ENCODE measurements at regions of chr1 and their contacts with region 1.

Region 1: DNA sequence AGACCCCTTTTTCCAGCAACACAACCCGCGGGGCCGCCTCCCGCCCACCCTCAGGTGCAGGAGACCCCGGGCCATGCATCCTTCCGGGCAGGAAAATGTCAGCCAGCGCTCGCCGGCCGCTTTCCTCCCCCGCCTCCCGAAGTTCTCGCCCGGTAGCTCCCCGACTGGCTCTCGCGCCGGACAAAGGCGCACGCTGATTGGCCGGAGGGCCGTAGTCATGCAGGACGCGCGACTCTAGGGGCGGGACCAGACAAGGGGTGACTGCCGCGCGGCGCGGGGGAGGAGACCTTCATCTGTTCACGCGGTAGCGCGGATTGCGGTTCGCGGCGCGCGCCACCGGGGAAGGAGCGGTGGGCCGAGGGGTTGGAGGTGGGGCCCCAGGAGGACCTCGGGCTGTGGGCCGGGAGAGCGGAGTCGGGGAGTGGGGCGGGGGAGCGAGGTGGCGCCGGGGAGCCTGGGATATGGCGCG is at the start of gene FLVCR1:
- DNase-seq: peak; percentile 99
- H3K4me3 Mint-ChIP-seq: no peak within 1 kb of the TSS
- H3K27ac Mint-ChIP-seq: peak within 1 kb of the TSS; percentile 97
- H3K4me1 Mint-ChIP-seq: peaks cover 19% of the 10 kb centered on the region
- H3K27me3 Mint-ChIP-seq: no peaks in the 10 kb centered on the region
- total RNA-seq, gene FLVCR1: 17.9 and 21.8 TPM in 2 replicates

Region 2: GRCh38 chr1:212791676-212792395 is 66.2 kb before region 1 on chr1 and contains the starts of genes NSL1 and TATDN3:
- intact Hi-C with region 1: loop called (anchors 1 kb)
- DNase-seq: peak; percentile 99
- H3K4me3 Mint-ChIP-seq: peak within 1 kb of the TSS; percentile 93
- H3K27ac Mint-ChIP-seq: peak within 1 kb of the TSS; percentile 96
- H3K4me1 Mint-ChIP-seq: peaks cover 26% of the 10 kb centered on the region
- H3K27me3 Mint-ChIP-seq: no peaks in the 10 kb centered on the region
- total RNA-seq, gene NSL1: 37.3 and 40.0 TPM in 2 replicates
- total RNA-seq, gene TATDN3: 15.1 and 16.2 TPM in 2 replicates

Region 3: DNA sequence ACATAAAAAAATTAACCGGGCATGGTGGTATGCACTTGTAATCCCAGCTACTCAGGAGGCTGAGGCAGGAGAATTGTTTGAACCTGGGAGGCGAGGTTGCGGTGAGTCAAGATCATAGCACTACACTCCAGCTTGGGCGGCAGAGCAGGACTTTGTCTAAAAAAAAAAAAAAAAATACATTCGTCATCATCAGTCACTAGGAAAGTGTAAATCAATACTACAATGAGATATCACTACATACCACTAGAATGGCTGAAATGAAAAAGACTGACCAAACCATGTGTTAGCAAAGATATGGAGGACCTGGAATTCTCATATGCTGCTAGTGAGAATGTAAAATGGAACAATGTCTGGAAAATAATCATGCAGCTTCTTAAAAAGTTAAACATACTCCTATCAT is 19.9 kb before region 1 on chr1:
- intact Hi-C with region 1: no loop called
- DNase-seq: no peak
- H3K4me3 Mint-ChIP-seq: no peak overlapping the region
- H3K27ac Mint-ChIP-seq: no peak overlapping the region
- H3K4me1 Mint-ChIP-seq: no peaks in the 10 kb centered on the region
- H3K27me3 Mint-ChIP-seq: no peaks in the 10 kb centered on the region

Region 4: DNA sequence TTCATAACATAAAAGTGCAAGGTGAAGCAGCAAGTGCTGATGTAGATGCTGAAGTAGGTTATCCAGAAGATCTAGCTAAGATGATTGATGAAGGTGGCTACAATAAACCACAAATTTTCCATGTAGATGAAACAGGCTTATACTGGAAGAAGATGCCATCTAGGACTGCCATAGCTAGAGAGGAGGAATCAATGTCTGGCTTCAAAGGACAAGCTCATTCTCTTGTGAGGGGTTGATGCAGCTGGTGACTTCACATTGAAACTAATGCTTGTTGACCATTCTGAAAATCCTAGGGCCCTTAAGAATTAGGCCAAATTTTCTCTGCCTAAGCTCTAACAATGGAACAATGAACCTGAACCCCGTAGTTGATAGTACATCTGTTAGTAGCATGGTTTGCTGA is 34.1 kb after region 1 on chr1:
- intact Hi-C with region 1: no loop called
- DNase-seq: no peak
- H3K4me3 Mint-ChIP-seq: no peak overlapping the region
- H3K27ac Mint-ChIP-seq: no peak overlapping the region
- H3K4me1 Mint-ChIP-seq: no peaks in the 10 kb centered on the region
- H3K27me3 Mint-ChIP-seq: no peaks in the 10 kb centered on the region

Region 5: GRCh38 chr1:212928323-212929291 is 70.6 kb after region 1 on chr1:
- intact Hi-C with region 1: no loop called
- DNase-seq: no peak
- H3K4me3 Mint-ChIP-seq: no peak overlapping the region
- H3K27ac Mint-ChIP-seq: no peak overlapping the region
- H3K4me1 Mint-ChIP-seq: peaks cover 1% of the 10 kb centered on the region
- H3K27me3 Mint-ChIP-seq: peaks cover 6% of the 10 kb centered on the region

Region 6: GRCh38 chr1:212950243-212951125 is 92.5 kb after region 1 on chr1 and contains the start of gene VASH2:
- intact Hi-C with region 1: loop called (anchors 5 kb)
- DNase-seq: peak; percentile 90
- H3K4me3 Mint-ChIP-seq: peak within 1 kb of the TSS; percentile 86
- H3K27ac Mint-ChIP-seq: peak within 1 kb of the TSS; percentile 6
- H3K4me1 Mint-ChIP-seq: peaks cover 8% of the 10 kb centered on the region
- H3K27me3 Mint-ChIP-seq: peaks cover 58% of the 10 kb centered on the region
- total RNA-seq, gene VASH2: 0.54 and 0.84 TPM in 2 replicates

Region 7: DNA sequence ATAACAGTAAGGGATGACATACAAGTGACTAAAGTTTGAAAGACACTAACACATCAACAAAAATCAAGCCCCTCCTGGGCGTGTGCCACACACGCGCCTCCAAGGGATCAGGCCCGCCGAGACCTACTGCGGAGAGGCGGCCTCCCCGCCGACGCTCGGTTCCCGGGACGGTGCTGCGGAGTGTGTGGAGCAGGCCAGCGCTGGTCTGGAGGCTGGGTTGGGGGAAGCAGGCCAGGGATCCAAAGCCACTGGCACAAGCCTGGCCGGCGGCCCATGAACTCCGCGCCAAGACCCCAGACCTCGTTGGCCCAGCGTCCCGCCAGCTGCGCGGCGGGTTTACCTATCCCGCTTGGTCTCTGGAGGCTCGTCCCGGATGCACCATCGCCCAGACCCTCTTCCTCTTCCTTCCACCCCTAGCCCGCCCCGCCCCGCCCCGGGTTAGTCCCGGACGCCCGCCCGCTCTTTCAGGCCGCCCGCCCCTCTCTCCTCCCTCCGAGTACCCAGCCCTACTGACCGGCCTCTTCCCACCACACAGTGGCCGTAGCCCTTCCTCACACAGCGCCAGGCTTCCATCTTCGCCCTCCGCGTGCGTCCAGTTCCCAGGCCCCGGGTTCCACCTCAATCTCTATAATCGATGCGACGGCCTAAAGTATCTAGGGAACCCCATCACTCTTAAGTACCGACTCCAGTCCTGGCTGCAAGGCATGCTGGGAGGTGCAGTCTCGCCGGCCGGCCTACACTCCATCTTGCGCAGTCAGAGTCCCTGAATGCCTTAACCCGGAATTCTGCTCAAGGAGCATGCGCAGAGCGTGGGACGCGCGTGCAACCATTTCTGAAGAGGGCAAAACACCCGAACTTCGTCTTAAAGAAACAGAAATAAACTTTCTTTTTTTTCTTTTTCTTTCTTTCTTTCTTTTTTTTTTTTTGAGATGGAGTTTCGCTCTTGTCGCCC is 157.3 kb after region 1 on chr1 and contains the start of gene ANGEL2:
- intact Hi-C with region 1: loop called (anchors 1 kb)
- DNase-seq: peak; percentile 99
- H3K4me3 Mint-ChIP-seq: peak within 1 kb of the TSS; percentile 99
- H3K27ac Mint-ChIP-seq: peak within 1 kb of the TSS; percentile 100
- H3K4me1 Mint-ChIP-seq: peaks cover 26% of the 10 kb centered on the region
- H3K27me3 Mint-ChIP-seq: peaks cover 8% of the 10 kb centered on the region
- total RNA-seq, gene ANGEL2: 43.7 and 47.6 TPM in 2 replicates

Measured in activated CD4-positive, alpha-beta T cell treated with anti-CD3 and anti-CD28 coated beads, Interleukin-2, amount 10 ng/mL, durations not matched to agents 24 days and 14 days (primary cell).